ENCODE measurements at regions of chr22 and their contacts with region 1.

Region 1: DNA sequence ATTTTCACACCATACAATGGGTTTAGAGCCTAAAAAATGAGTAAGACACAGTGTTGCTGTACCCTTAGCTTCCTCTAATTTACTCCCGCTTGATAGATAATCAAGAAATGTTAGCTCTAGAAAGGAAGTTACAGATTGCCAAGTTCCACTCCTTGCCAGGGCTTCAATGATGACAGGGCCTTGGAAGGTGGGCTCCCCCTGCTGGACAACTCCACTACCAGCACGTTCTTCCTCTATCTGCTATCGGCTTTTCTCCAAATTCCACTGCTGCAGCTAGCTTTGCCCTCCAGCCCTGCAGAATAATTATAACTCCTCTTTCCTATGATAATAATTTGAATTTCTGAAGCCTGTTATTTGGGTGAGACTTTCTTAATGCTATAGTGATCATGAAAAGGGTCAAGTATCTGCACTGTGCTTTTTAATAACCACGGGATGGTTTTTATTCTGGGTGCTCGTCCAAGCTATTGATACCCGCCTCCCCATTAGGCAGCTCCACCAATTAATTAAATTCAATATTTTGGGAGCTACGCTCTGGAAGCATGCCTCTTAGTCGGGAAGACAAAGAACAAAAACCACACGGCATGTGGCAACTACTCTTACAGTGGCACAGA is 9.0 kb downstream of the SYN3 start:
- DNase-seq: peak; percentile 5
- H3K4me3 ChIP-seq: no peak overlapping the region
- H3K27ac ChIP-seq: no peak overlapping the region
- H3K4me1 ChIP-seq: no peaks in the 10 kb centered on the region
- H3K27me3 ChIP-seq: peaks cover 18% of the 10 kb centered on the region
- CTCF ChIP-seq: peak; percentile 93 to 96 (median 94)

Region 2: GRCh38 chr22:33000342-33001280 is 48.6 kb before region 1 on chr22:
- dilution Hi-C with region 1: no loop called
- DNase-seq: no peak
- H3K4me3 ChIP-seq: no peak overlapping the region
- H3K27ac ChIP-seq: no peak overlapping the region
- H3K4me1 ChIP-seq: peaks cover 34% of the 10 kb centered on the region
- H3K27me3 ChIP-seq: no peaks in the 10 kb centered on the region
- CTCF ChIP-seq: peak; percentile 92 to 94 (median 92)

Region 3: GRCh38 chr22:33209930-33210784 is 160.9 kb after region 1 on chr22:
- dilution Hi-C with region 1: loop called (anchors 25 kb)
- DNase-seq: no peak
- H3K4me3 ChIP-seq: no peak overlapping the region
- H3K27ac ChIP-seq: no peak overlapping the region
- H3K4me1 ChIP-seq: no peaks in the 10 kb centered on the region
- H3K27me3 ChIP-seq: no peaks in the 10 kb centered on the region
- CTCF ChIP-seq: peak; percentile 65 to 77 (median 71)

Measured in keratinocyte (primary cell).